ENCODE measurements at regions of chr9 and their contacts with region 1.

Region 1: DNA sequence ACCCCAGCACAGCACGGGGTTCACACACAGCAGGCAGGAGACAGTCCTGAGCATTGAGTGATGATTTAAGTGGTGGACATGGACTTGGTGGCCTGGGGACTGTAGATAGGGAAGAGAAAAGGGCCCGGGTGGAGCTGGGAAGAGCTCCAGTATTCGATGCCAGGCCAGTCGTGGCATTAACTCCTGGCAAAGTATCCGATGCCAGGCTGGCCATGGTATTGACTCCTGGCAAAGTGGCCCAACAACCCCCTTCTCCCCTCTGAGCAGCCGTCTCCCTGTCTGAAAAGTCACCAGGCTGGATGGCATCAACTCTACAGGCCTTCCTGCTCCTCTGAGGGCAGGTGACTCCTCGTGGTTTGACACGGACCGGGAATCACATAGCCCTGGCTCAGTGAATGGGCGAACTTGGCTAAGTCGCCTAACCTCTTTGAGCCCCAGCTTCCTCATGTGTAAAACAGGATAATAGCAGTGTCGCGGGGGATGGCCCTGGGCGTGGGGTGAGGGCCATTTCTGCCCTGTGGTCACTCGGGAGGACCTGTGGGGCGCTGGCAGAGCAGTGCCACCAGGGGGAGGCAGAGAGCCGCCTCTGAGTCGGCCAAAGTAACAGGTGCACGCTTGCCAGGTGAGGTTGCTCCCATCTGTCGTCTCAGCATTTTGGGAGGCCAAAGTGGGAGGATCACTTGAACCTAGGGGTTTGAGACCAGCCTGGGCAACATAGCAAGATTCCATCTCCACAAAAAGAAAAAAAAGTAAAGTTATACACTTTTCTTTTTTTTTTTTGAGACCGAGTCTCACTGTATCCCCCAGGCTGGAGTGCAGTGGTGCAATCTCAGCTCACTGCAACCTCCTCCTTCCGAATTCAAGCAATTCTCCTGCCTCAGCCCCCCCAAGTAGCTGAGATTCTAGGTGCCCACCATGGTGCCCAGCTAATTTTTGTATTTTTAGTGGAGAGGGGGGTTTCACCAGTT is 5.7 kb upstream of the SEC16A start:
- DNase-seq: peak; percentile 68 to 87 (median 73)
- ATAC-seq: peak in 2 of 4 donors; percentile 20 to 56
- H3K4me3 ChIP-seq: no peak overlapping the region
- H3K27ac ChIP-seq: no peak overlapping the region
- H3K4me1 ChIP-seq: peaks cover 8 to 36% (median 23%) of the 10 kb centered on the region in 12 donors
- H3K27me3 ChIP-seq: no peaks in the 10 kb centered on the region
- CTCF ChIP-seq: peak; percentile 94 to 100 (median 97)
- POLR2A ChIP-seq: no peak

Region 2: DNA sequence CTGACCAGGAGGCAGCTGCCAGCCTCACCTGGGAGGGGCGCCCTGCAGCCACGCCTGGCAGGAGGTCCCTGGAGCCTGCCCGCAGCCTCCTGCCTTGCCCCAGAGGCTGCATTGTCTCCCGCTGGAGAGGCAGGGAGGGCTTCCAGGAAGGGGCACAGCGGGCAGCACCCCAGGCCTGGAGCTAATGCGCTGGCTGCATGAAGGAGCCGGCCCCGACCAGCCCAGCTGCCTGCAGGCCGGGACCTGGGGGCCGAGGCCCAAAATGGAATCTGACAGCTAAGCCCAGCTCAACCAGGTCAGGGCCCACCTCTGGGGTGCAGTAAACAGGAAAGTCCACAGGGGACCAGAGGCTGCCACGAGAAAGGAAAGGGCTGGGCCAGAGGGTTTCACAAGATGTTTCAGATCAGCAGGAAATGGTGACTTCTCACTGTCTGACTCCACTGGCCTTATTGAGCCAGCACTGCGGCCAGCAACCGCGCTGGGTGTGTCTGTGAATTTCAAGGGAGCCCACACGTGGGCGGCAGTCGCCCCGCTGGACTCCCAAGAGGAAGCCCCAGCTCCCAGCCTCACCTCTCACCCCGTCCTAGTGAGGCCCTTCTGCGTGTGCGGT is 76.0 kb after region 1 on chr9:
- intact Hi-C with region 1: no loop called
- DNase-seq: peak; percentile 71 to 92 (median 87)
- ATAC-seq: peak; percentile 52 to 72 (median 65)
- H3K4me3 ChIP-seq: peak overlapping the region in 2 of 12 donors; percentile 5 to 14
- H3K27ac ChIP-seq: peak overlapping the region; percentile 44 to 93 (median 80)
- H3K4me1 ChIP-seq: peaks cover 30 to 75% (median 65%) of the 10 kb centered on the region in 12 donors
- H3K27me3 ChIP-seq: no peaks in the 10 kb centered on the region
- CTCF ChIP-seq: peak in 5 of 12 donors; percentile 14 to 40 (median 32)
- POLR2A ChIP-seq: no peak

Region 3: DNA sequence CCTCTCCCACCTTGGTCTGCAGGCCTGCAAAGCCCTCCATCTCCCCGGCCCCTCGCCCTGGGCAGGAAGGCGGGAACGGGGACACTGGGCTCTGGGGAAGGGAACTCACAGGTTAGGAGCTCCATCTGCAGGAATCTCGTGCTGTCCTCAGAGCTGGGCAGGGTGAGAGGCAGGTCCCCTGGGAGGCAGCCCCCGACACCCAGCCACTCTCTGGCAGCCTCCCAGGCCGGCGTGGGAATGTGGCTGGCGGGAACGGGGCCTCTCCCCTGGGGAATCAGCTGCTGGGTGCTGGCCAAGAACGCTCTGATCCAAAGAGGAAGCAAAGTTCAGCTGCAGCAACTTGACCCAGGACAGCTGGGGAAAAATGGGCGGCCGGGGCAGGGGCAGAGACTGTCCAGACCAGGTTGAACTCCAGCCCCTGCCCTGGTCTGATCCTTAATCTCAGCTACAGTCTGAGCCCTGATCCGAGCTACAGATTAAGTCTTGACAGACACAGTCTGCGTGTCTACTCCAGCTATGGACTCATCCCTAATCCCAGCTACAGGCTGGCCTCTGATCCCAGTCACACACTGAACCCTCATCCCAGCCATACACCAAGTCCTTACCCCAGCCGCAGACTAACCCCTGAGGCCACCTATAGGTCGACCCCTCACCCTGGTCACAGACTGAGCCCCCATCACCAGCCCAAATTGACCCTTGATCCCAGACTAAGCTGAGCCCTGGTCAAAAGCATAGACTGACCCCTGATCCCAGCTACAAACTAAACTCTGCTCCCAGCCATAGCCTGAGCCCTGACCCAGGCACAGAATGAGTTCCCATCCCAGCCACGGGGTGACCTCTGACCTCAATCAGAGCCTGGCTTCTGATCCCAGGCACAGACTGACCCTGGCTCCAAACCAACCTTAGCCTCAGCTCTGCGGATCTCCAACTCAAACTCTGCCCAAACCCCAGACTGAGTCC is 136.8 kb after region 1 on chr9:
- intact Hi-C with region 1: loop called in 6 of 10 experiments (anchors 1 to 2 kb)
- DNase-seq: peak; percentile 90 to 93 (median 91)
- ATAC-seq: peak; percentile 75 to 88 (median 83)
- H3K4me3 ChIP-seq: no peak overlapping the region
- H3K27ac ChIP-seq: peak overlapping the region in 11 of 12 donors; percentile 26 to 75 (median 54)
- H3K4me1 ChIP-seq: peaks cover 8 to 49% (median 36%) of the 10 kb centered on the region in 12 donors
- H3K27me3 ChIP-seq: no peaks in the 10 kb centered on the region
- CTCF ChIP-seq: peak; percentile 30 to 81 (median 63)
- POLR2A ChIP-seq: no peak

Region 4: GRCh38 chr9:136631038-136632000 is 142.8 kb after region 1 on chr9:
- intact Hi-C with region 1: loop called (anchors 1 to 2 kb)
- DNase-seq: peak; percentile 79 to 92 (median 80)
- ATAC-seq: peak; percentile 80 to 96 (median 92)
- H3K4me3 ChIP-seq: no peak overlapping the region
- H3K27ac ChIP-seq: no peak overlapping the region
- H3K4me1 ChIP-seq: peaks cover 0 to 28% (median 12%) of the 10 kb centered on the region in 12 donors
- H3K27me3 ChIP-seq: peaks cover 0 to 3% (median 0%) of the 10 kb centered on the region in 9 donors
- CTCF ChIP-seq: peak; percentile 71 to 89 (median 82)
- POLR2A ChIP-seq: no peak